ENCODE measurements at regions of chr4 and their contacts with region 1.

Region 1: DNA sequence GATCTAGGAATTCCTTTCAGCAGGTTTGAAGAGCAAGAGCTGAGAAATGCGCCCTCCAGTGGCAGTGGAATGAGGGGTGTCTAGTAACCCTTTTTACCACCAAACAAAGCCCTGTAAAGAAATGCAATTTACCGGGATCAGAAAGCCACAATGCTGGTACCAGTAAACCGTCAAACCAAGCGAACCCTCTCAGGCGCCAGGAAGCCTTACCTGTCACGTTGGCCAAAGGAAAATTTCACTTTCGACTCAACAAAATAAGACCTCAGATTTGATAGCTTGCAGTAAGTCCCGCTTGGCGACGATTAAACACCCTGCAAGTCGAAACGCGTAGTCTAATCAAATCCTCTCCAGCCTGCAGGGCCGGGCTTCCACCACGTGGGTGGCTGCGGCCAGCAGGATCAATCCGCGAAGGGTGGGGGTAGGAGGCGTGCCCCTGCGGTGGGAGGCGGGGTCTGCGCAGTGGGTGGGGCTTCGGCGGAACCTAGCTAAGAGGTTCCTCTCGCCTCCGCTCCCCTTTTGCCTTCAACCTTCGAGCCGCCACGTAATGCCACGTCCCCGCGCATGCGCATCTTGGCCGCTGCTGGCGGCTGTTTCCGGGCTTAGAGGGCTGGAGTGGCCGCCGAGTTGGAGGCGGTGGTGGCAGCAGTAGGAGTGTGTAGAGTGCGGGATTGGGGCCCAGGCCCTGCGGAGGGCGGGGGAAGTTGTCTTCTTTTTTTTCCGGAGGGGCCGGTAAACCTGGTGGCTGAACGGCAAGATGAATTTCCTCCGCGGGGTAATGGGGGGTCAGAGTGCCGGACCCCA is at the start of gene USO1:
- DNase-seq: peak; percentile 92

Region 2: DNA sequence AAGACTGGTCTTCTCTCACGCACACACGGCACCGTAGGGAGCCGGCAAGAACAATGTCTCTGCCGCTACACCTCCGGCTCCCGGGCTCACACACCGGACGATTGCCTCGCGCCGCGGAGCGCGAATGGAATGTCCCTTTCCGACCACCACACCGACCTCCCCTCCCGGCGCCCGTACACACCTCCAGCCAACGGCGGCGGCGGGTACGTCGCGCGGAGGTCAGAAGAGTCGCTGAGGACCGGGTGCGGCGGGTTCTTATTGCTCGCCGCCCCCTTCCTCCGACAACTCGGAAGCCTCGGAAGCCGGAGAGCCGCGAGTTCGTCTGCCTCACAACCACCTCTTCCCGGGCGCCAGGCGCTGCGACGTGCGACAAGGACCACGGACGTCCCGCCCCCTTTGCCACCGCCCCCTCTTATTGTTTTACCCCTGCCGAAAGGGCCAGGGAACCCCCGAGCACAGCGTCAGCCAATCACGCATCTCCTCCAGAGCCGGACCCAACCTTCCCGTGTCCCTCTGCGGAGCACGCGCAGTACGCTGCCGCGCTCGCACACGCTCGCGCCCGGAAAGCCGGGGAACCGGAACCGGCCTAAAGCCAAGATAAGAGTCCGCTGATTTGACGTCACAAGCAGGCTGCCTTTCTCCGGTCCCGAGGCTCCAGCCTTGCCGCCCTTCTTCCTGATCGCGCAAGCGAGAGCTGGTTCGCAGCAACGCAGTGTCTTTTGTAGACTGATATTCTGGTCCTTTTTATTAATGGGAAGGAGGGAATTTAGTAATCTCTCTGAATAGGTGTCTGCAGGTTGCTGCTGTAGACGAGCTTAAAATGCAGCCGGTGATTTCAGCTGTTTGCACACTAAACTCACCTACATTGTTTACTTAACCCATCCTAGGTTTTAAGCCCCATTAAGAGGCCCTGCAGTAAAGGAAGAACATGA is 51.0 kb before region 1 on chr4 and contains the start of gene G3BP2:
- CTCF ChIA-PET with region 1: interaction called, 4 read pairs
- POLR2A ChIA-PET with region 1: interaction called, 29 read pairs
- DNase-seq: peak; percentile 92

Region 3: DNA sequence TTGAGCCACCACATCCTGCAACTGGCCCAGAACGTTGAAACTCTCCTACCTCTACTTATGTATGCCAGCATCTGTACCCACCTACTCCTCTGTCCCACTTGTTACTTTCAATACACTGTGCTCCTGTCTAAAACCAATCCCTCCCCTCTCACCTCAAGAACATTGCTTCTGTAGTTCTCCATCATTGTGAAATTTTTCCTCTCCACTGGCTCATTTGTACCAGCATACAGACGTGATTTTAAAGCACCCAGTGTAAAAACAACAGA is 25.4 kb before region 1 on chr4:
- CTCF ChIA-PET with region 1: no interaction called
- POLR2A ChIA-PET with region 1: no interaction called
- DNase-seq: no peak

Region 4: DNA sequence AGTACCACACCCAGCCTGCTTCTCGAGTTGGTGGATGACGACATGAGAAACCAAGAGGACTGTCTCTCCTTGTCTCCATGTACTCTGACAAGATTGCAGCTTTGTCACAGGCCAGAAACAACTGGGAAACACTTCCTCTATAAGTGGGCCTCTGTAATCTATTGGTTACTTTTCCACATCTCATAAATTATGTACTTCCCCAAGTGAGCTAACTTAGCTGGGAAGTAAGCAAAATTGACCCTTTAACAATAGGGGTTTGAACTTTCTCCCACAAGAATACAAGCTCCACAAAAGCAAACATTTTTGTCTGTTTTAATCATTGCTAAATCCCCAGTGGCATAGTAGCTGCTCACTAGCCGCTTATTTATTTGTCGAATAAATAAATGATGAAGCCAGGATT is 14.0 kb before region 1 on chr4:
- CTCF ChIA-PET with region 1: interaction called, 9 read pairs
- POLR2A ChIA-PET with region 1: interaction called, 14 read pairs
- DNase-seq: no peak